ENCODE measurements at regions of chr4 and their contacts with region 1.

Region 1: DNA sequence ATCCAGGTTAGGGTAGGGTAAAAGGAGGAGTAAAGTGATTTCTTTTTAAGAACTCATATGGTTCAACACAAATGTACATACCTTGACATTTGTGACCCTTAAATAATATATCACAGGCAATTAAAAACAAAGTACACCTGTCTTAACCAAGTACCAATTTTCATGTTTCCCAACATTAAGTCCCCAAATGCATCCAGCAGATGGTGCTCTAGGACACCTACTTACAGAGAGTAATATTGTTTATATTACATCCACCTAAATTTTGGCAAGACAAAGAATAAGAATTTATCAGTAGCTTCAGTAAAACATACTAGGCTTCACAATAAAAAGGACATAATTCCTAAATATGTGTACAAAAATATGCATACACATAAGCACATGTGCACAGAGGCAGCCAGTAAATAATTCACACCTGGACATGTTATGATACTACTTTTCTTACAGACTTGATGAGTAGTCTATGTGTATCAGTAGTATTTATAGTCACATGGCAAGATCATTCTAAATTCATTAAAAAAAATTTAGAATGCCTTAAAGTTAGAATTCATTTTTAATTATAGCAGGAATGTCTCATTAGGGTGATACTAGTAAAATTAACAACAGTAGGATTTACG is 219.7 kb downstream of the DCLK2 start:
- DNase-seq: peak; percentile 75
- H3K4me3 ChIP-seq: no peak overlapping the region
- H3K27ac ChIP-seq: no peak overlapping the region
- H3K4me1 ChIP-seq: peaks cover 25% of the 10 kb centered on the region
- H3K27me3 ChIP-seq: no peaks in the 10 kb centered on the region
- CTCF ChIP-seq: peak; percentile 84

Region 2: GRCh38 chr4:149999485-150000074 is 298.4 kb before region 1 on chr4:
- CTCF ChIA-PET with region 1: interaction called, 3 read pairs
- POLR2A ChIA-PET with region 1: no interaction called
- intact Hi-C with region 1: loop called (anchors 5 kb)
- DNase-seq: peak; percentile 86
- H3K4me3 ChIP-seq: no peak overlapping the region
- H3K27ac ChIP-seq: no peak overlapping the region
- H3K4me1 ChIP-seq: peaks cover 17% of the 10 kb centered on the region
- H3K27me3 ChIP-seq: no peaks in the 10 kb centered on the region
- CTCF ChIP-seq: peak; percentile 84

Region 3: DNA sequence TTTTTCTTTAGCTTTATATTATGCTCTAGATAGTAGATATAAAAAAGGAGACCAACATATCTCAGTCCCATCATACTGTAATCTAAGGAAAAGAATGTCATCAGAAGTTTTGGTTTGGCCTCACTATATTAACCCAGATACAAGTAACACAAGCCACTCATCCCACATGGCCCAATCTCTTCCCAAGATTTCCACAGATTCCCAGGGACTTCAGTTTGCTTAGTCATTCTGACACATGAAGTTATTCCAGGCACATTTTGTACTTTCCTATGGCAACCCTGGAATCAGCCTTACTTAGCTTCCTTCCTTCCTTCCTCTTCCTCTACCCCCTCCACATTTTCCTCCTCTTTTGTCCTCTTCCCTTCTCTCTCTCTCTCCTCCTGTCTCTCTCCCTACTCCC is 241.4 kb before region 1 on chr4:
- CTCF ChIA-PET with region 1: no interaction called
- POLR2A ChIA-PET with region 1: no interaction called
- intact Hi-C with region 1: no loop called
- DNase-seq: no peak
- H3K4me3 ChIP-seq: no peak overlapping the region
- H3K27ac ChIP-seq: no peak overlapping the region
- H3K4me1 ChIP-seq: no peaks in the 10 kb centered on the region
- H3K27me3 ChIP-seq: no peaks in the 10 kb centered on the region
- CTCF ChIP-seq: no peak

Region 4: GRCh38 chr4:150593996-150594395 is 296.0 kb after region 1 on chr4:
- CTCF ChIA-PET with region 1: no interaction called
- POLR2A ChIA-PET with region 1: no interaction called
- intact Hi-C with region 1: loop called (anchors 1 kb)
- DNase-seq: peak; percentile 90
- H3K4me3 ChIP-seq: peak overlapping the region; percentile 3
- H3K27ac ChIP-seq: peak overlapping the region; percentile 43
- H3K4me1 ChIP-seq: peaks cover 62% of the 10 kb centered on the region
- H3K27me3 ChIP-seq: no peaks in the 10 kb centered on the region
- CTCF ChIP-seq: peak; percentile 59

Region 5: DNA sequence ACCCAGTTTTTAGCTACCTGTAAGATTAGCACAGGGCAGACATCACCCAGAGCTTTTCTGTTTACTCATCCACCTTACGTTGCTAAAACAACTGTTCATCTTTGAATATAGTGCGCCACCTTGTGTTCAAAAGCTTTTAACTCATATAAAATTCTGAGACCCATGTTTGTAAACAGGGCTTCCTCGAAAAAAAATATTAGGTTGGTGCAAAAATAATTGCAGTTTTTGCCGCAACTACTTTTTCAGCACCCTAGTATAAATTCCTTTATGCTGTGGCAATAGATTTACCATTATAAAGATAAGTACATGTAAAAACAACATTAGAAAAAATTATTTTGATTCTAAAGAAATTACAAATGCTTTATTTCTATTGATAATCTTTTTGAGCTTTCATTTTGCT is 569.2 kb after region 1 on chr4:
- CTCF ChIA-PET with region 1: interaction called, 5 read pairs
- POLR2A ChIA-PET with region 1: no interaction called
- intact Hi-C with region 1: loop called (anchors 1 kb)
- DNase-seq: peak; percentile 88
- H3K4me3 ChIP-seq: no peak overlapping the region
- H3K27ac ChIP-seq: no peak overlapping the region
- H3K4me1 ChIP-seq: no peaks in the 10 kb centered on the region
- H3K27me3 ChIP-seq: no peaks in the 10 kb centered on the region
- CTCF ChIP-seq: peak; percentile 68

Region 6: DNA sequence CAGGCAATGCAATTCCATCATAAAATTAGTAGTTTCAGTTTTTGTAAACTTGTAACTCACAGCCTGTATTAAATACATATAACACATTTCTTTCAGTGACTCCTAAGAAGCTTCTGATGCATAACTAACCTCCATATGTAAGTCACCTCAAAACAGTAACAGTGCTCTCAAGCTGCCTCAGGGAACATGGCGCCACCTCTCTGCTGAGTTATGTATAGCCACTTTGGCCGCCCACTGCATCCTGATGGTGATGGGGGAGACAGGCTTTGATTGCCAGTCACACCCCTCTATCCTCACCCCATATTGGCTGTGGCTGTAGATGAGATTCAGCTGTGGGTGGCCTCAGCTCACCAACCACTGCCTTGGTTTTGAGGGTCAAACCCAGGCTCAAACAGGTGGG is 662.9 kb after region 1 on chr4:
- CTCF ChIA-PET with region 1: no interaction called
- POLR2A ChIA-PET with region 1: no interaction called
- intact Hi-C with region 1: loop called (anchors 10 kb)
- DNase-seq: peak; percentile 64
- H3K4me3 ChIP-seq: no peak overlapping the region
- H3K27ac ChIP-seq: no peak overlapping the region
- H3K4me1 ChIP-seq: no peaks in the 10 kb centered on the region
- H3K27me3 ChIP-seq: no peaks in the 10 kb centered on the region
- CTCF ChIP-seq: peak; percentile 76

Measured in A673 (cell line).